CD4-positive, alpha-beta T cell (primary cell): ENCODE measurements at regions of chr17 and their contacts with region 1.

Region 1: DNA sequence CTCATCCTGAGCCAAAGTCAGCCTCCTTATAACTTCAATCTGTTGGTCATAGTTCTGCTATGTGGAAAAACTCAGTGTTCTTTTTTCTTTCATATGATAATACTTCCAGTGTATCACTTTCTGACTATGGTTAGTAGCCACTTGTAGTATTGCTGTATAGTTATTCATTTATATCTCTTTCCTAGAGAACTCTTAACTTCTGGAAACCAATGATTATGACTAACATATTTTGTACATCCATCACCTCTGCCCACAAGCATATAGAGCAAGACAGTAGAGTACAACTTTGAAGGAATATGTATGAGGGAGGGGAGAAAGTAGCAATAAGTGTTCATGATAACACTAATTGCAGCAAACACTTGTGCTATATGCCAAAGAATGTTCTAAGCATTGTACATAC is 38.6 kb downstream of the COX10 start:
- DNase-seq: no peak
- ATAC-seq: no peak
- H3K4me3 ChIP-seq: no peak overlapping the region
- H3K4me3 Mint-ChIP-seq: no peak overlapping the region
- H3K27ac ChIP-seq: no peak overlapping the region
- H3K27ac Mint-ChIP-seq: no peak overlapping the region
- H3K4me1 ChIP-seq: no peaks in the 10 kb centered on the region
- H3K4me1 Mint-ChIP-seq: peaks cover 45% of the 10 kb centered on the region
- H3K27me3 ChIP-seq: no peaks in the 10 kb centered on the region
- H3K27me3 Mint-ChIP-seq: no peaks in the 10 kb centered on the region
- CTCF ChIP-seq: no peak

Region 2: GRCh38 chr17:13864551-13864950 is 243.3 kb before region 1 on chr17:
- CTCF ChIA-PET with region 1: no interaction called
- POLR2A ChIA-PET with region 1: no interaction called
- intact Hi-C with region 1: loop called in 1 of 2 experiments (anchors 5 kb)
- DNase-seq: no peak
- ATAC-seq: no peak
- H3K4me3 ChIP-seq: no peak overlapping the region
- H3K4me3 Mint-ChIP-seq: no peak overlapping the region
- H3K27ac ChIP-seq: no peak overlapping the region
- H3K27ac Mint-ChIP-seq: no peak overlapping the region
- H3K4me1 ChIP-seq: no peaks in the 10 kb centered on the region
- H3K4me1 Mint-ChIP-seq: no peaks in the 10 kb centered on the region
- H3K27me3 ChIP-seq: no peaks in the 10 kb centered on the region
- H3K27me3 Mint-ChIP-seq: no peaks in the 10 kb centered on the region
- CTCF ChIP-seq: no peak